Left ventricle myocardium inferior (tissue), 1 donor: ENCODE measurements at regions of chr9 and their contacts with region 1.

Region 1: GRCh38 chr9:114405294-114406034 is 17.7 kb upstream of the AKNA start:
- DNase-seq: peak; percentile 65
- H3K4me3 ChIP-seq: no peak overlapping the region
- H3K27ac ChIP-seq: no peak overlapping the region
- H3K4me1 ChIP-seq: no peaks in the 10 kb centered on the region
- H3K27me3 ChIP-seq: peaks cover 12% of the 10 kb centered on the region
- CTCF ChIP-seq: peak; percentile 92

Region 2: DNA sequence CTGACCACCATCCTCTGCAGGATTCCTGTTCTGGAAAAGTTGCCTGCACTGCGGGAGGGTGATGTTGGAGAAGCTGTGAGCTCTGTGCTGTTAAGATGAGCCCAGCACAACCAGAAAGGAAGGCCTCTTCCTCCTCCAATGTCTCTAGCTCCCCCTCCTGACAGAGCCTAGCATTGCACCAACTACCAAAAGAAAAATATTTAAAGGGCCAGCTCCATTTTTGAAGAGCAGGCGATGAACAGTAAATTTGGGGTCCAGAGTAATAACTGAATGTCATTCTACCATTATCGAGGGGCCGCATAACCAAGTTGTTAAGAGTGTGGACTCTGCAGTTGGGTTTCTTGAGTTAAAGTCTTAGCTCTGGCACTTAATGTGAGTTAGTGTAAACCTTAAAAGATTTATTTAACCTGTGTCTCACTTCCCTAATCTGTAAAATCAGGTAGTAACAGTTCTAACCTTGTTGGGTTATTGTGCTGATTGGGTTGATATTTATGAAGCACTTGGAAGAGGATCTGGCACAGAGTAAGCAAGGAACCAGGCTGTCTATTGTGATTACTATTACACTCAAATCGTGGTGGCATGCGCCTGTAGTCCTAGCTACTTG is 248.2 kb after region 1 on chr9:
- intact Hi-C with region 1: loop called (anchors 5 kb)
- DNase-seq: peak; percentile 28
- H3K4me3 ChIP-seq: no peak overlapping the region
- H3K27ac ChIP-seq: no peak overlapping the region
- H3K4me1 ChIP-seq: no peaks in the 10 kb centered on the region
- H3K27me3 ChIP-seq: no peaks in the 10 kb centered on the region
- CTCF ChIP-seq: peak; percentile 91

Region 3: DNA sequence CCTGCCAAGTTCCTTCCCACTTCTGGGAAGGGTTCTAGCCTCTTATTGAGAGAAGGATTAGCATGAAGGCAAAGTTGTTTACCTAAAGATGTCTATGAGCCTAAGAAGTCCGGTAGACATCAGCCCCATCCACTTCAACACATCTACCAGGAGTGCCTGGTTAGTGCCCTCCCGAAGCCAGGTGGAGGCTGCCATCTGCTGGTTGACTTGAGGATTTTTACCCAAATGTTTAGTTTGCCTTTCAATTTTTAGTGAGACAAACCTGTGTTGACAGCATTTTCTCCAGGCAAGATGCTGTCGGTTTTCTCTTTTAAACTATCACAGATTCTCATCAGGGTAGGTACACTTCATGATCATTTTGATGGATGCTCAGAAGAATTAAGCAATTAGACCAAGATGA is 608.5 kb after region 1 on chr9:
- intact Hi-C with region 1: loop called (anchors 5 kb)
- DNase-seq: peak; percentile 36
- H3K4me3 ChIP-seq: no peak overlapping the region
- H3K27ac ChIP-seq: no peak overlapping the region
- H3K4me1 ChIP-seq: no peaks in the 10 kb centered on the region
- H3K27me3 ChIP-seq: peaks cover 89% of the 10 kb centered on the region
- CTCF ChIP-seq: peak; percentile 81